CD4-positive, alpha-beta memory T cell (primary cell): ENCODE measurements at regions of chr17 and their contacts with region 1.

Region 1: GRCh38 chr17:42248351-42249179 is 27.6 kb downstream of the STAT5B start:
- DNase-seq: peak; percentile 82 to 95 (median 88)
- H3K4me3 ChIP-seq: peak overlapping the region; percentile 20 to 45
- H3K4me3 Mint-ChIP-seq: peak overlapping the region; percentile 78 to 96 (median 85)
- H3K27ac ChIP-seq: peak overlapping the region; percentile 90
- H3K27ac Mint-ChIP-seq: peak overlapping the region; percentile 92 to 99 (median 98)
- H3K4me1 ChIP-seq: peaks cover 78% of the 10 kb centered on the region
- H3K4me1 Mint-ChIP-seq: peaks cover 55 to 81% (median 68%) of the 10 kb centered on the region in 4 donors
- H3K27me3 ChIP-seq: no peaks in the 10 kb centered on the region
- H3K27me3 Mint-ChIP-seq: no peaks in the 10 kb centered on the region

Region 2: DNA sequence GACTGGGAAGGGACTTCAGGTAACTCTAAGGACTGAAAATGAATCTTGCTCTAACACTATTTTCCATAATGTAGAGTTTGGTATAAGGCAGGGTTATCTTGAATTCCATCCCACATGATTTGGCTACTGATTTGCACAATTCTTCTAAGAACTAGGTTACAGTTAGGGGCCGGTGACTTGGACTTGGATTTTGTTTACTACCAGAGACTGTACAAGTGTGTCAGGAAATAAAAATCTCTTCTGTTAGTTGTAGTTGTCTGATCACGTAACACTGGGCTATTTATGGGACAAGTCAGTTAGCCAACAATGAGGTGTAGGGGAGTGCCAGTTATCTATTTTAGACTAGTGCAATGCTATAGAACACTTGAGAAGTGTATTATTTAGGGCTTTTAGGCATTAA is 14.6 kb before region 1 on chr17:
- CTCF ChIA-PET with region 1: interaction called, 6 read pairs
- POLR2A ChIA-PET with region 1: interaction called, 30 read pairs
- intact Hi-C with region 1: no loop called
- DNase-seq: no peak
- H3K4me3 ChIP-seq: no peak overlapping the region
- H3K4me3 Mint-ChIP-seq: peak overlapping the region in 1 of 8 donors; percentile 17
- H3K27ac ChIP-seq: no peak overlapping the region
- H3K27ac Mint-ChIP-seq: peak overlapping the region in 6 of 7 donors; percentile 8 to 57 (median 45)
- H3K4me1 ChIP-seq: peaks cover 41% of the 10 kb centered on the region
- H3K4me1 Mint-ChIP-seq: peaks cover 27 to 55% (median 43%) of the 10 kb centered on the region in 4 donors
- H3K27me3 ChIP-seq: no peaks in the 10 kb centered on the region
- H3K27me3 Mint-ChIP-seq: no peaks in the 10 kb centered on the region

Region 3: GRCh38 chr17:42266918-42267778 is 18.6 kb after region 1 on chr17:
- CTCF ChIA-PET with region 1: interaction called, 28 read pairs
- POLR2A ChIA-PET with region 1: interaction called, 286 read pairs
- intact Hi-C with region 1: loop called (anchors 1 kb)
- DNase-seq: peak; percentile 61 to 92 (median 77)
- H3K4me3 ChIP-seq: no peak overlapping the region
- H3K4me3 Mint-ChIP-seq: peak overlapping the region in 7 of 8 donors; percentile 5 to 82 (median 40)
- H3K27ac ChIP-seq: peak overlapping the region; percentile 92
- H3K27ac Mint-ChIP-seq: peak overlapping the region; percentile 94 to 99 (median 95)
- H3K4me1 ChIP-seq: peaks cover 69% of the 10 kb centered on the region
- H3K4me1 Mint-ChIP-seq: peaks cover 41 to 72% (median 56%) of the 10 kb centered on the region in 4 donors
- H3K27me3 ChIP-seq: no peaks in the 10 kb centered on the region
- H3K27me3 Mint-ChIP-seq: no peaks in the 10 kb centered on the region

Region 4: GRCh38 chr17:42287926-42288802 is 39.6 kb after region 1 on chr17 and contains the start of gene STAT5A:
- CTCF ChIA-PET with region 1: interaction called, 5 read pairs
- POLR2A ChIA-PET with region 1: interaction called, 137 read pairs
- intact Hi-C with region 1: loop called (anchors 1 kb)
- DNase-seq: peak; percentile 81 to 89 (median 83)
- H3K4me3 ChIP-seq: peak within 1 kb of the TSS; percentile 86 to 88
- H3K4me3 Mint-ChIP-seq: peak within 1 kb of the TSS; percentile 90 to 97 (median 94)
- H3K27ac ChIP-seq: peak within 1 kb of the TSS; percentile 87
- H3K27ac Mint-ChIP-seq: peak within 1 kb of the TSS; percentile 92 to 99 (median 97)
- H3K4me1 ChIP-seq: peaks cover 48% of the 10 kb centered on the region
- H3K4me1 Mint-ChIP-seq: peaks cover 37 to 62% (median 47%) of the 10 kb centered on the region in 4 donors
- H3K27me3 ChIP-seq: no peaks in the 10 kb centered on the region
- H3K27me3 Mint-ChIP-seq: no peaks in the 10 kb centered on the region
- total RNA-seq, gene STAT5A: 130 to 133 TPM